ENCODE measurements at regions of chr10 and their contacts with region 1.

Region 1: GRCh38 chr10:30529373-30529998 is 95.5 kb downstream of the MAP3K8 start:
- DNase-seq: peak; percentile 90
- H3K4me3 Mint-ChIP-seq: peak overlapping the region; percentile 76
- H3K27ac Mint-ChIP-seq: peak overlapping the region; percentile 93
- H3K4me1 Mint-ChIP-seq: peaks cover 60% of the 10 kb centered on the region
- H3K27me3 Mint-ChIP-seq: no peaks in the 10 kb centered on the region

Region 2: GRCh38 chr10:30493609-30494530 is 35.6 kb before region 1 on chr10:
- CTCF ChIA-PET with region 1: interaction called, 4 read pairs
- POLR2A ChIA-PET with region 1: no interaction called
- intact Hi-C with region 1: loop called (anchors 5 kb)
- DNase-seq: peak; percentile 34
- H3K4me3 Mint-ChIP-seq: no peak overlapping the region
- H3K27ac Mint-ChIP-seq: peak overlapping the region; percentile 3
- H3K4me1 Mint-ChIP-seq: peaks cover 45% of the 10 kb centered on the region
- H3K27me3 Mint-ChIP-seq: no peaks in the 10 kb centered on the region

Region 3: DNA sequence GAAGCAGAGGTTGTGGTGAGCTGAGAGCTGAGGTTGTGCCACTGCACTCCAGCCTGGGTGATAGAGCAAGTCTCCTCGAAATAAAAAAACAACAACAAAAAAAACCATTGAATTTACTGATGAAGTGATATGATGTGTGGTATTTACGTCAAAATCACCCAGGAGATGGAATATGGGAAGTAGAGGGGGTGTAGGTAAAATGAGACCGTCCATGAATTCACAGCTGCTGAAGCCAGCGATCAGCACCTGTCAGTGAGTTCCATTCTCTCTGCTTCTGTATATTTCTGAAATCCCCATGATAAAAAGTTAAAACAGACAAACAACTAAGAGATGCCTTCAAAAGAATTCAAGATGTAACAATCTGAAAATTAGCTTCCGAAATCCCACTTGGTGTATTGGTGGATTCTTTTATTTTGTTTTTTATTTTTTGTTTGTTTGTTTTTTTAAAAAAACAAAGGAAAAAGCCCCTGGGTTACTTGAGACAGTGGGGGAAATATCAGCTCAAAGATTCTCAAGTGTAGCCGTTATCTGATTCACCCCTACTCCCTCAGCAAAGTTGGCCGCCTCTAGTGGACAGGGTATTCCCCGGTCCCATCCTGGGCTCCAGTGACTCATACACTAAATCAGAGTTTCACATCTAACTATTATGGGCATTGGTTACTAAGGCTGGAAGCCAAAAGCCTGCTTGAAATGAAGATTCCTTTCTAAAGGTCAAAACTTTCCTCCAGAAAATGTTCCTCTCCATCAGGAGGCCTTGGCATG is 19.1 kb before region 1 on chr10:
- CTCF ChIA-PET with region 1: interaction called, 6 read pairs
- POLR2A ChIA-PET with region 1: interaction called, 4 read pairs
- intact Hi-C with region 1: loop called (anchors 2 kb)
- DNase-seq: peak; percentile 74
- H3K4me3 Mint-ChIP-seq: no peak overlapping the region
- H3K27ac Mint-ChIP-seq: peak overlapping the region; percentile 72
- H3K4me1 Mint-ChIP-seq: peaks cover 14% of the 10 kb centered on the region
- H3K27me3 Mint-ChIP-seq: no peaks in the 10 kb centered on the region